Heart right ventricle (tissue), 16 donors: ENCODE measurements at regions of chr2 and their contacts with region 1.

Region 1: DNA sequence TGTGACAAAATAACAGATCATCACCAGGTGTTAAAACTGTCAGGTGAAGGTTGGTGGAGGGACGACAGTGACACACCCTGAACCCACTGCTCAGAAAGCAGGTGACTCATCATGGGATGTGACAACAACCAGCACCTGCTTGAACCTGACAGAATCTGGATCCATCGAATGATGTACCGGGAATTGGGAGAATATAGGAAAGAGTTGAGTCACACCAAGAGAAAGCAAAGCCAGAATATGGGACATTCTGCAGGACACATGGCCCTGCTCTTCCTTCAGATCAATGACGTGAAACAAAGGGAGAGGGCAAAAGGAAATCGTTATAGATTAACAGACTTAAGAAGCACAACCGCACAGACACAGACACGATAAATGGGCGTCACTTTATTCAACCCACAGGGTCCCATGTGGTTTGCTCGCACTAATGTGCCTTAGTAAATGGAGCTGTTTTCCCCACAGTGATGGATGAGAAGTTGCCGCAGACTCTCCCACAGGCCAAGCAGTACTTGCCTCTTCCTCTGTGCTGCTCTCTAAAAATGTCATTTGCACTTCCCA is 100.1 kb downstream of the CRACDL start:
- DNase-seq: no peak
- ATAC-seq: no peak
- H3K4me3 ChIP-seq: no peak overlapping the region
- H3K27ac ChIP-seq: peak overlapping the region in 1 of 10 donors; percentile 48
- H3K4me1 ChIP-seq: peaks cover 0 to 23% (median 15%) of the 10 kb centered on the region in 9 donors
- H3K27me3 ChIP-seq: no peaks in the 10 kb centered on the region
- CTCF ChIP-seq: no peak

Region 2: DNA sequence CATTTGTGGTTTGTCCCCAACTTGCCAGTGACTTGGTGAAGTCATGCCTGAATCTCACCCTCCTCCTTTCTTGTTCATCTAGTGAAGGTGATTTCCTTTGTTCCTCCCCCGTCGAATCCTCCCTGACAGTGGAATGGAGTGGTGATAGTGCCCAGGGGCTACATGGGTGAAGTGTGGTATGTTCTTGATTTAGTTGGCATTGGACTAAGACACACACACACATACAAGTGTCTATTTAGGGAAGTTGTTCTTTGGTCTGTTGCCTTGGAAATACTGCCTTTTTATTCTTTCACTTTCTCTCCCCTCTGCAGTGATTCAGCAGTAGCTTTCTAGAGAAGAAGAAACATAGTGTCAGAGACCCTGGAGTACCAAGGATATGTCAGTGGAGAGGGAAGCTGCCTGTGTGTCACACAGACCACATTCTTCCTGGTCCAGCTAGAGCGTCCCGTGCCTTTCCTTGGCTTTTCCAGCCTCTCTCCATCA is 380.4 kb before region 1 on chr2:
- intact Hi-C with region 1: no loop called
- DNase-seq: no peak
- ATAC-seq: peak in 7 of 8 donors; percentile 39 to 54 (median 46)
- H3K4me3 ChIP-seq: no peak overlapping the region
- H3K27ac ChIP-seq: peak overlapping the region in 3 of 10 donors; percentile 60 to 88 (median 62)
- H3K4me1 ChIP-seq: peaks cover 4 to 99% (median 52%) of the 10 kb centered on the region in 9 donors
- H3K27me3 ChIP-seq: no peaks in the 10 kb centered on the region
- CTCF ChIP-seq: no peak

Region 3: GRCh38 chr2:98649135-98649991 is 186.5 kb before region 1 on chr2:
- intact Hi-C with region 1: loop called (anchors 1 to 2 kb)
- DNase-seq: peak; percentile 25 to 85
- ATAC-seq: peak; percentile 86 to 96 (median 92)
- H3K4me3 ChIP-seq: no peak overlapping the region
- H3K27ac ChIP-seq: peak overlapping the region in 1 of 10 donors; percentile 18
- H3K4me1 ChIP-seq: peaks cover 0 to 22% (median 0%) of the 10 kb centered on the region in 9 donors
- H3K27me3 ChIP-seq: no peaks in the 10 kb centered on the region
- CTCF ChIP-seq: peak; percentile 97 to 99 (median 99)

Region 4: DNA sequence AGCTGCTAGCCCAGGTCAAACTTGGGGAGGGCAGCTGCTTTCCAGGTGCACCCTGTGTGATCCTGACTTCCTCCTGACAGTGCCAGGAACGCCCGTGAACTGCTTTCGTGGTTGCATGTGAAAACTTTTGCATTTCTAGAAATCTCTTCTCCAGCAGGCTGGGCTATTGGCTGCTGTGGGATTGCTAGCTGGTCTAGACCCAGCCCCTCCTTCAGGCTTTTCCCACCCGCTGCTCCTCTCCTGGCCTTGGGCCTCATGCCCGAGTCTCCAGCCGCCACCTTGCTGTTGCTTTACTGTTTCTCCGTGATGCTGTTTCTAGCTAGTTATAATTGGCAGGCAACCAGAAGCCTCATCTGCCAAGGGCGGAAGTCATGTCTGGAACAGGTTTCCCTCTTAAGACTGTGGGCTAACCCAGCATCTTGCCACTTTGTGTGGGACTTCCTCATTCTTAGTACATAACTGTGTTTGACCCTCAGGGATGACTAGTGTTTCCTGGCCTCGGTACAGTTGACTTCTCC is 77.9 kb before region 1 on chr2:
- intact Hi-C with region 1: loop called in 1 of 10 experiments (anchors 2 kb)
- DNase-seq: peak; percentile 43 to 74
- ATAC-seq: peak; percentile 93 to 97 (median 96)
- H3K4me3 ChIP-seq: no peak overlapping the region
- H3K27ac ChIP-seq: peak overlapping the region in 8 of 10 donors; percentile 2 to 85 (median 38)
- H3K4me1 ChIP-seq: peaks cover 0 to 71% (median 18%) of the 10 kb centered on the region in 9 donors
- H3K27me3 ChIP-seq: no peaks in the 10 kb centered on the region
- CTCF ChIP-seq: peak in 3 of 9 donors; percentile 18 to 29 (median 20)